ENCODE measurements at regions of chr17 and their contacts with region 1.

Region 1: GRCh38 chr17:57357399-57357807 is 101.1 kb downstream of the MSI2 start:
- DNase-seq: peak; percentile 70 to 81
- ATAC-seq: peak; percentile 73 to 90 (median 84)
- H3K4me3 ChIP-seq: peak overlapping the region in 4 of 10 donors; percentile 12 to 28 (median 16)
- H3K27ac ChIP-seq: peak overlapping the region; percentile 61 to 90 (median 74)
- H3K4me1 ChIP-seq: peaks cover 3 to 79% (median 31%) of the 10 kb centered on the region in 9 donors
- H3K27me3 ChIP-seq: no peaks in the 10 kb centered on the region
- CTCF ChIP-seq: no peak

Region 2: GRCh38 chr17:57284984-57285646 is 72.3 kb before region 1 on chr17:
- intact Hi-C with region 1: loop called in 1 of 10 experiments (anchors 5 kb)
- DNase-seq: no peak
- ATAC-seq: no peak
- H3K4me3 ChIP-seq: no peak overlapping the region
- H3K27ac ChIP-seq: peak overlapping the region in 3 of 10 donors; percentile 1 to 47 (median 15)
- H3K4me1 ChIP-seq: peaks cover 8 to 78% (median 62%) of the 10 kb centered on the region in 9 donors
- H3K27me3 ChIP-seq: no peaks in the 10 kb centered on the region
- CTCF ChIP-seq: no peak

Region 3: GRCh38 chr17:57440522-57441485 is 83.4 kb after region 1 on chr17:
- intact Hi-C with region 1: loop called in 1 of 10 experiments (anchors 2 kb)
- DNase-seq: peak; percentile 72 to 88
- ATAC-seq: peak; percentile 78 to 89 (median 84)
- H3K4me3 ChIP-seq: no peak overlapping the region
- H3K27ac ChIP-seq: peak overlapping the region; percentile 42 to 83 (median 67)
- H3K4me1 ChIP-seq: peaks cover 23 to 91% (median 61%) of the 10 kb centered on the region in 9 donors
- H3K27me3 ChIP-seq: no peaks in the 10 kb centered on the region
- CTCF ChIP-seq: peak in 8 of 9 donors; percentile 30 to 79 (median 64)

Measured in heart right ventricle (tissue), 16 donors.